Aorta (tissue), 5 donors: ENCODE measurements at regions of chr11 and their contacts with region 1.

Region 1: GRCh38 chr11:47415949-47416472 is 7.6 kb downstream of the SLC39A13 start:
- DNase-seq: peak; percentile 94 to 96
- ATAC-seq: peak; percentile 89
- H3K4me3 ChIP-seq: no peak overlapping the region
- H3K27ac ChIP-seq: peak overlapping the region; percentile 32 to 86
- H3K4me1 ChIP-seq: no peaks in the 10 kb centered on the region
- H3K27me3 ChIP-seq: no peaks in the 10 kb centered on the region

Region 2: GRCh38 chr11:47387911-47388678 is 27.9 kb before region 1 on chr11:
- intact Hi-C with region 1: no loop called
- DNase-seq: no peak
- ATAC-seq: no peak
- H3K4me3 ChIP-seq: no peak overlapping the region
- H3K27ac ChIP-seq: no peak overlapping the region
- H3K4me1 ChIP-seq: no peaks in the 10 kb centered on the region
- H3K27me3 ChIP-seq: no peaks in the 10 kb centered on the region

Region 3: DNA sequence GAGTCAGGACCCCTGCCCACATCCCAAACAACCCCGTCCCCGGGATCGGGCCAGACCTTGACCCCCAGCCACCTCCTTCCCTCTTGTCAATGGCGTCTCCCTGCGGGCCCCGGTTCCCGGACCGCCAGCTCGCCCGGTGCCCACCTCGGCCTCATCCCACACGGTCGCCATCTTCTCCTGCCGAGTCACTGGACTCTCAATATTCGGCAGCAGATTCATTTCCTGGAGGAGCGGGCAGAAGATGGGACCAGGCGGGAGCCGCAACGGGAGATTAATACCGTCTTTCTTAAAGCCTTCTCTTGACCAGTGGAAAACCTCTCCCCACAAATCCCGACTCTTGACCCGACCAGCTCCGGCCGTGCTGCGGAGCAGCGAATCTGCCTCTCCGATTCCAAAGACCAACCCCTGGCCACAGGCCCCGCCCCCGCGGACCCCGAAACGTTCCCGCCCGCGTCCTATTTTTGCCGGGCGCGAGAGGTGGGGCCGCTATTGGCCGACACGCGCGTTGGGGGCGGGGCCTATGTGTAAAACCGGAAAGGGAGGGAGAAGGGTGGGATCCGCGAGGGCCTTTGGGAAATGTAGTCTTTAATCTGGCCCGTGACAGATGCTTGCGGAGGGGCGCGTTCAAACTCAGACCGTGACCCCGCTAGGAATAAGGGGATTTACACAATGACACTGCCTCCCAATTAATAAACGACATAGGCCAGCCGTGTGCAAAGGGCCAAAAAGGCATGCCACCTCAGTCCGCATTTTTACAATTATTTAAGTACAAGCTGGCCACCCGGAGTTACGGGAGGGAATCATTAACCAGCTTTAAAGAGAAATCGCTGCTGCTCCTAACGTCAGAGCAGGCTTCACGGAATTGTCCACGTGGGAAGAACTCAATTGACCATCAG is 10.3 kb after region 1 on chr11 and contains the start of gene PSMC3:
- intact Hi-C with region 1: loop called in 1 of 2 experiments (anchors 1 kb)
- DNase-seq: peak; percentile 99 to 100
- ATAC-seq: peak; percentile 98
- H3K4me3 ChIP-seq: peak within 1 kb of the TSS; percentile 83 to 94
- H3K27ac ChIP-seq: peak within 1 kb of the TSS; percentile 19 to 76
- H3K4me1 ChIP-seq: no peaks in the 10 kb centered on the region
- H3K27me3 ChIP-seq: no peaks in the 10 kb centered on the region
- total RNA-seq, gene PSMC3: 84.2 to 117 TPM

Region 4: GRCh38 chr11:47437746-47438418 is 21.9 kb after region 1 on chr11:
- intact Hi-C with region 1: no loop called
- DNase-seq: no peak
- ATAC-seq: no peak
- H3K4me3 ChIP-seq: no peak overlapping the region
- H3K27ac ChIP-seq: no peak overlapping the region
- H3K4me1 ChIP-seq: no peaks in the 10 kb centered on the region
- H3K27me3 ChIP-seq: no peaks in the 10 kb centered on the region